Gastrocnemius medialis (tissue), 4 donors: ENCODE measurements at regions of chr20 and their contacts with region 1.

Region 1: GRCh38 chr20:50958615-50959542 is at the start of gene MOCS3:
- DNase-seq: peak; percentile 75 to 86
- ATAC-seq: peak; percentile 88 to 92
- H3K4me3 ChIP-seq: peak within 1 kb of the TSS; percentile 77 to 99 (median 90)
- H3K27ac ChIP-seq: peak within 1 kb of the TSS; percentile 88 to 98 (median 92)
- H3K4me1 ChIP-seq: peaks cover 46 to 54% of the 10 kb centered on the region in 2 donors
- H3K27me3 ChIP-seq: no peaks in the 10 kb centered on the region
- CTCF ChIP-seq: no peak
- POLR2A ChIP-seq: peak; percentile 26 to 39
- total RNA-seq, gene MOCS3: 3.1 to 5.7 (median 4.7) TPM

Region 2: GRCh38 chr20:50790651-50791277 is 168.1 kb before region 1 on chr20:
- in situ Hi-C with region 1: no loop called
- intact Hi-C with region 1: loop called (anchors 1 kb)
- DNase-seq: peak; percentile 40 to 57
- ATAC-seq: peak in 1 of 2 donors; percentile 45
- H3K4me3 ChIP-seq: peak overlapping the region; percentile 7 to 34 (median 24)
- H3K27ac ChIP-seq: peak overlapping the region; percentile 27 to 60 (median 50)
- H3K4me1 ChIP-seq: peaks cover 10 to 17% of the 10 kb centered on the region in 2 donors
- H3K27me3 ChIP-seq: no peaks in the 10 kb centered on the region
- CTCF ChIP-seq: peak; percentile 9 to 64 (median 49)
- POLR2A ChIP-seq: no peak

Region 3: GRCh38 chr20:50919567-50919966 is 39.3 kb before region 1 on chr20:
- in situ Hi-C with region 1: no loop called
- intact Hi-C with region 1: loop called (anchors 5 kb)
- DNase-seq: peak in 1 of 2 donors; percentile 37
- ATAC-seq: peak; percentile 46
- H3K4me3 ChIP-seq: no peak overlapping the region
- H3K27ac ChIP-seq: peak overlapping the region in 1 of 4 donors; percentile 2
- H3K4me1 ChIP-seq: peaks cover 69 to 82% of the 10 kb centered on the region in 2 donors
- H3K27me3 ChIP-seq: no peaks in the 10 kb centered on the region
- CTCF ChIP-seq: no peak
- POLR2A ChIP-seq: no peak